Sigmoid colon (tissue), 7 donors: ENCODE measurements at regions of chr22 and their contacts with region 1.

Region 1: GRCh38 chr22:43273902-43274484 is 69.2 kb downstream of the SCUBE1 start:
- DNase-seq: no peak
- H3K4me3 ChIP-seq: no peak overlapping the region
- H3K27ac ChIP-seq: no peak overlapping the region
- H3K4me1 ChIP-seq: peaks cover 0 to 10% (median 4%) of the 10 kb centered on the region in 4 donors
- H3K27me3 ChIP-seq: peaks cover 0 to 9% (median 8%) of the 10 kb centered on the region in 3 donors
- CTCF ChIP-seq: peak; percentile 38 to 67 (median 63)
- EP300 ChIP-seq: no peak
- POLR2A ChIP-seq: no peak

Region 2: DNA sequence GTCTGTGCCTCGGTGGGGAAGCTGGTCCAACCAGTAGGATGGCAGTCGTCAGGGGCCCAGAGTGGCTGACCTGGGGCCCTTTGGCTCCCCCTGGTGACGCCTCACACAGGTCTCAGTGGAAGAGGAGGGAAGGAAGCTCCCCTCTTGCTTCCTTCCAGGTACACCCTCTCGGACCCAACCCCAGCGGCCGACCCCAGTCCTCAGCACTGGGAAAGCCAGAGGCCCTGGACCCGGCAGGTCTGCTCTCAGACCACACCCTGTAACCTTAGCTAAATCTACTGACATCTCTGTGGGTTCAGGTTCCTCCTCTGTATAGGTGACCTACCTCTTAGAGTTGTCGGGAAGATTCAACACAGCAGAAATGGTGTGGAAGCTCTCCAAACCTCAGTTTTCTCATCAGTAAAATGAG is 72.5 kb after region 1 on chr22:
- intact Hi-C with region 1: loop called (anchors 1 kb)
- DNase-seq: peak; percentile 75
- H3K4me3 ChIP-seq: no peak overlapping the region
- H3K27ac ChIP-seq: no peak overlapping the region
- H3K4me1 ChIP-seq: peaks cover 0 to 20% (median 18%) of the 10 kb centered on the region in 4 donors
- H3K27me3 ChIP-seq: peaks cover 22 to 81% (median 58%) of the 10 kb centered on the region in 3 donors
- CTCF ChIP-seq: peak; percentile 26 to 63 (median 40)
- EP300 ChIP-seq: no peak
- POLR2A ChIP-seq: no peak